Activated CD4-positive, alpha-beta T cell treated with anti-CD3 and anti-CD28 coated beads, Interleukin-2, amount 10 ng/mL, durations not matched to agents 24 days and 14 days (primary cell): ENCODE measurements at regions of chr2 and their contacts with region 1.

Region 1: DNA sequence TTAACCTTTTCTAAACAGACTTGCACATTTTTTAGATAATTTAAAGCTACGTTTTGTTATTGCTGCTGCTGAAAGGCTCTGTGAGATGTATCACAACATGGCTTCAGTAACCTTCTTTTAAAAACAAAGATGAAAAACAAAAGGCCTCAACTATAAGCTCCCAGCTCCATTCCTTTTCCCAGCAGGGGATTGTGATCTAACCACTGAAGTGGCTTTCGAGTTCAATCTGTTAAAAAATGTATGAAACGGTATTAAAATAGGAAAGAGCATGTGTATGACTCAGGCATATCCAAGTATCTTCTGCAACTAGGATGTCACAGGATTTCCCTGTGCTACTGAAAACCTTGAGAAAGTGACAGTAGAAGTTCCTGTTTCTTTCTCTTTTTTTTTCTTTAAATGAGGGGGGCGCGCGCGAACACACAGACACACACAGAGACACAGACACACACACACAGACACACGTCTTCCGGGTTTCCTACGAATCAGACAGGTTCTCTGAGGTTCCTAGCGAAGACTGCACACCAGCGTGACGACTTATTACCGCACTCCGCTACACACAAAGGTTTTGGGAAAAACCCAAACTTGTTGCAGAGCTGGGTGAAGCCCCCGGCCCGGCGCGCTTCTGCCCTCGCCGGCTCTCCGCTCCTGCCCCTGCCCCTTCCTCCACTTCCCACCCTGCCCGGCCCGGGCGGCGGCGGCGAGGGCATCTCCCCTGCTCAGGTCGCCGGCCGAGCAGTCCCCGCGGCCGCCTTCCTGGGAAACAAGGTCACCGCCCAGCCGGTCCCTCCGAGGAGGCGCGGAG is 86.8 kb downstream of the RBMS1 start:
- DNase-seq: peak; percentile 92
- H3K4me3 Mint-ChIP-seq: peak overlapping the region; percentile 98
- H3K27ac Mint-ChIP-seq: peak overlapping the region; percentile 89
- H3K4me1 Mint-ChIP-seq: peaks cover 69% of the 10 kb centered on the region
- H3K27me3 Mint-ChIP-seq: peaks cover 4% of the 10 kb centered on the region

Region 2: GRCh38 chr2:160269803-160270570 is 136.8 kb before region 1 on chr2:
- intact Hi-C with region 1: loop called (anchors 5 kb)
- DNase-seq: peak; percentile 79
- H3K4me3 Mint-ChIP-seq: peak overlapping the region; percentile 74
- H3K27ac Mint-ChIP-seq: peak overlapping the region; percentile 73
- H3K4me1 Mint-ChIP-seq: peaks cover 42% of the 10 kb centered on the region
- H3K27me3 Mint-ChIP-seq: peaks cover 10% of the 10 kb centered on the region

Region 3: GRCh38 chr2:160338901-160339685 is 67.7 kb before region 1 on chr2:
- intact Hi-C with region 1: loop called (anchors 2 kb)
- DNase-seq: no peak
- H3K4me3 Mint-ChIP-seq: no peak overlapping the region
- H3K27ac Mint-ChIP-seq: no peak overlapping the region
- H3K4me1 Mint-ChIP-seq: peaks cover 36% of the 10 kb centered on the region
- H3K27me3 Mint-ChIP-seq: no peaks in the 10 kb centered on the region

Region 4: DNA sequence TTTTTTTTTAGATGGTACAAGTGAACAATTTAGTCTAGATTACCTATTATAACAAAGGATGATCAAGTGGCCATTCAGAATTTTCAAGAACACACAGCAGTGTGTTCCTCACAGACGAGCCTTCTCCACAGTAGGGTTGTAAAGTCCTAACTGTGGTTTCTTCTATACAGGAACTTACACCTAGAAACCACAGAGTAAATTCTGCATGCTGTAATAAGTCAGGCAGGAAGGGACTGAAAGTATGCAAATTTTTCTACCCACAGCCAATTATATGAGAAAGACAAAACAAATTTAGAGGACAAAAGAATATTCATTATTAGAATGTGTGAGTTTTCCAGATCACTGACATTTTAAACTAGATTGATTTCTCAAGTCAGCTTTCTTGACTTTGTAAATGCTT is 12.6 kb before region 1 on chr2:
- intact Hi-C with region 1: loop called (anchors 1 kb)
- DNase-seq: no peak
- H3K4me3 Mint-ChIP-seq: peak overlapping the region; percentile 45
- H3K27ac Mint-ChIP-seq: peak overlapping the region; percentile 68
- H3K4me1 Mint-ChIP-seq: peaks cover 44% of the 10 kb centered on the region
- H3K27me3 Mint-ChIP-seq: no peaks in the 10 kb centered on the region

Region 5: DNA sequence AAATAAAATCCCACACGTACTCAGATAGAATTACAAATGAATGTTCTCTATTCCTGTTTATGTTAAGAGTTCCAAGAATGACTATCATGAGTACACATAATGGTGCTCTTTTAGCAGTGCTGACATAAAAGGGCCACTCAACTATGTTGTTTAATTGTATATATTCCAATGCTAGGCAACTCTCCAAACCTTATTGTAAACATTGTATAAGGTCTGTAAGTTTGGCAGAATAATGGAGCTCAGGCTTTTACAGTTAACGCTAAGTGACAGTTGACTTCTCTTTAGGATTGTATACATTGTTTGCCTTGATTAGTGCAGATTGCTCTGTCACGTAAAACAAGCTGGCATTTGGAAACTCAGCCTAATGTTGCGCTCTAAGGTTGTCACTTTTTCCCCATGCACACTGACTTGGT is 66.1 kb after region 1 on chr2:
- intact Hi-C with region 1: loop called (anchors 1 kb)
- DNase-seq: no peak
- H3K4me3 Mint-ChIP-seq: peak overlapping the region; percentile 24
- H3K27ac Mint-ChIP-seq: peak overlapping the region; percentile 80
- H3K4me1 Mint-ChIP-seq: peaks cover 53% of the 10 kb centered on the region
- H3K27me3 Mint-ChIP-seq: no peaks in the 10 kb centered on the region

Region 6: DNA sequence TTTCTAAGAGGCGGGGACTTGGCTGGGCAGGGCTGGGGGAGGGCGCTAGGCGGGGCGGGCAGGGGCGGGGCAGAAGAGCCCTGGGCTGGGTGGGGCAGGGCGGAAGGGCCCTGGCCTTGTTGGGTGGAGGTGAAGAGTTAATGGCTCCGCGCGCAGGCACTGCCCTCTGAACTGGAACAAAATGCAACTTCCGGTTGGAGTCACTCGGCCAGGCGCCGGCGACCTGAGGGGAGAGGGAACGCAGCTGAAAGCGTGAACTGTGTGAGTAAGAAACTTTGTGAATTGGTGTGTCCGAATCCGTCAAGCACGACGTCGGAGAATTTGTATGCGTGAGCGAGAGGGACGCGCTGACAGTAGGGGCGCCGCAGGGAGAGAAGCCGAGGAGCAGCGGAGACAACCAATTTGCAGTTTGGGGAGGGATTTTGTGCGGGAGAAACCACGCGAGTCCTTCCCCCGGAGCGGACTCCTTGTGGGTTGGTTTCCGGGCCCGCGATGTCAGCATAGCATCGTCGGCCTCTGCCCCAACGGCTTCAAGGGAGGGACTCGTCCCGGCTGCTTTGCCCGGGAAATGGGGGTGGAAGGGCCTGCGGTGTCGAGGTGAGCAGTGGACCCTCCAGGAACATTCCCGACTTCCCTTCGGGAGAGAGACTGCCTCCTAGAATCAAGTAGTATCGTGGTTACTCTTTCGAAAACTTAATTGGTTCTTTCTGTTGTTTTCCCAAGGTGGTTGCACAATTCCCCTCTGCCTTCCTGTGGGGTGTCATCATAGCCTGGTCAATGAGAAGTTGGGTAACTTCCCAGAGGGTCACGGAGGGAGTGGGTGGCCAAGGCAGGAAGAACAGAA is 753.7 kb after region 1 on chr2 and contains the start of gene TANK:
- intact Hi-C with region 1: loop called (anchors 5 kb)
- DNase-seq: peak; percentile 96
- H3K4me3 Mint-ChIP-seq: peak within 1 kb of the TSS; percentile 97
- H3K27ac Mint-ChIP-seq: peak within 1 kb of the TSS; percentile 98
- H3K4me1 Mint-ChIP-seq: peaks cover 55% of the 10 kb centered on the region
- H3K27me3 Mint-ChIP-seq: no peaks in the 10 kb centered on the region
- total RNA-seq, gene TANK: 91.2 and 97.2 TPM in 2 replicates